Panc1 (cell line): ENCODE measurements at regions of chr4 and their contacts with region 1.

Region 1: GRCh38 chr4:178275671-178276360 is 833.6 kb upstream of the AGA start:
- DNase-seq: no peak
- ATAC-seq: no peak
- H3K4me3 ChIP-seq: no peak overlapping the region
- H3K27ac ChIP-seq: no peak overlapping the region
- H3K4me1 ChIP-seq: no peaks in the 10 kb centered on the region
- H3K27me3 ChIP-seq: no peaks in the 10 kb centered on the region
- CTCF ChIP-seq: peak; percentile 13; the same call in 1 of the 2 replicates

Region 2: DNA sequence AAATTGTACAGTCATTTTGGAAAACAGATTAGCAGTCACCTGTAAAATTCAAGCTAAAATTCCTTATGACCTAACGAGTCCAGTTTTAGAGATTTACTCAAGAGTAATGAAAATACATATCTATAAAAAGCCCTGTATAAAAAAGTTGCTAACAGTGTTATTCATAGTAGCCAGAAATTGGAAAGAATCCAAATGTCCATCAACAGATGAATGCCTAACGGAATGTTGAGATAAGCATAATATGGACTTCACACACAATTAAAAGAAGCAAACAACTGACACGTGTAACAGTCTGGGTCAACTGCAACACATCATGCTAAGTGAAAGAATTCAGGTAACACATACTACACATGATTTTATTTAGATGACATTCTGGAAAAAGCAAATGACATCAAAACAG is 248.8 kb before region 1 on chr4:
- CTCF ChIA-PET with region 1: interaction called, 10 read pairs
- POLR2A ChIA-PET with region 1: no interaction called
- in situ Hi-C with region 1: no loop called
- intact Hi-C with region 1: no loop called
- DNase-seq: no peak
- ATAC-seq: no peak
- H3K4me3 ChIP-seq: no peak overlapping the region
- H3K27ac ChIP-seq: no peak overlapping the region
- H3K4me1 ChIP-seq: no peaks in the 10 kb centered on the region
- H3K27me3 ChIP-seq: no peaks in the 10 kb centered on the region
- CTCF ChIP-seq: no peak

Region 3: GRCh38 chr4:178296669-178297068 is 20.9 kb after region 1 on chr4:
- CTCF ChIA-PET with region 1: no interaction called
- POLR2A ChIA-PET with region 1: no interaction called
- in situ Hi-C with region 1: no loop called
- intact Hi-C with region 1: no loop called
- DNase-seq: no peak
- ATAC-seq: no peak
- H3K4me3 ChIP-seq: no peak overlapping the region
- H3K27ac ChIP-seq: no peak overlapping the region
- H3K4me1 ChIP-seq: no peaks in the 10 kb centered on the region
- H3K27me3 ChIP-seq: no peaks in the 10 kb centered on the region
- CTCF ChIP-seq: 0 out of 2 replicates have a peak, but pooled peaks have one; percentile 7